ENCODE measurements at regions of chrX and their contacts with region 1.

Region 1: DNA sequence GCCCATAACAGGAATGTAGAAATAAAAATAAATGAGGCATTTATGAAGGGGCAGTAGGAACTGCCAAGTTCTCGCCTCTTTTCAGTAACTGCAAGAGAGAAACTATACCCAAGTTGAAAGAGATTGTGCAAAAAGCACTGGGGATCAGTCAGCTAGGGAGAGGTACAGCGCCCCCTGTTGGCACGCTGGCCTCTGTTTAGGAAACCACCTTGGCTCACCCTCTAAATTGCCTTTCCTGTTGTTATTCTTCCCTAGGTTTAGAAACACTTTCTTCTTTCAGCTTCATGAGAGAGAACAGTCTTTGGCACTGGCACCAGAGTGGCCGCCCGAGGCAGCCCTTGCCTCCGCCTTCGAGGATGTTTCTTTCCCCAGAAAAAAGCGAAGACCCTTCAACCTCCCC is 348.5 kb downstream of the MID1IP1 start:
- DNase-seq: peak; percentile 42
- ATAC-seq: no peak
- H3K4me3 Mint-ChIP-seq: no peak overlapping the region
- H3K27ac Mint-ChIP-seq: peak overlapping the region; percentile 30
- H3K4me1 Mint-ChIP-seq: peaks cover 51% of the 10 kb centered on the region
- H3K27me3 Mint-ChIP-seq: no peaks in the 10 kb centered on the region
- CTCF ChIP-seq: no peak

Region 2: GRCh38 chrX:38754102-38754790 is 395.5 kb before region 1 on chrX:
- CTCF ChIA-PET with region 1: interaction called, 7 read pairs
- POLR2A ChIA-PET with region 1: no interaction called
- intact Hi-C with region 1: loop called (anchors 1 kb)
- DNase-seq: no peak
- ATAC-seq: peak; percentile 58
- H3K4me3 Mint-ChIP-seq: no peak overlapping the region
- H3K27ac Mint-ChIP-seq: no peak overlapping the region
- H3K4me1 Mint-ChIP-seq: no peaks in the 10 kb centered on the region
- H3K27me3 Mint-ChIP-seq: no peaks in the 10 kb centered on the region
- CTCF ChIP-seq: no peak

Region 3: GRCh38 chrX:38803586-38804431 is 346.0 kb before region 1 on chrX:
- CTCF ChIA-PET with region 1: interaction called, 3 read pairs
- POLR2A ChIA-PET with region 1: interaction called, 21 read pairs
- intact Hi-C with region 1: loop called (anchors 1 kb)
- DNase-seq: peak; percentile 55
- ATAC-seq: peak; percentile 63
- H3K4me3 Mint-ChIP-seq: peak overlapping the region; percentile 89
- H3K27ac Mint-ChIP-seq: peak overlapping the region; percentile 80
- H3K4me1 Mint-ChIP-seq: peaks cover 39% of the 10 kb centered on the region
- H3K27me3 Mint-ChIP-seq: no peaks in the 10 kb centered on the region
- CTCF ChIP-seq: no peak

Region 4: DNA sequence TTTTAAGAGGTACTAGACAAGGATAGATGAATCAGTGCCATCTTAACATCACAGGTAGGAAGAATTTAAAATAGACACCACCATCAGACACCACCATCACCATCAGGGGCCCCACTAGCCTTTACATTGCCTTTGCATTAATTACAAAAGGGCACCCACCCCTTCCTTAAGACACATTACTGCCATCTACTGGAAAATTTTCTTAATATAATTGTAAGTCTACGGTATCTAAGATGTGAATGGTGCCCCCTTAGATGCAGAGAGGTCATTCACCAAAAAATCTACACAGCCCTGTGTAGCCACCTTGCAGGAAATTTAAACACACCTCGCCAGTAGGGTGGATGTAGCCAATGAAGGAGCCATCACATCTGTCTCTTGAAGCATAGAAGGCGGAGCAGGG is 164.4 kb before region 1 on chrX:
- CTCF ChIA-PET with region 1: no interaction called
- POLR2A ChIA-PET with region 1: no interaction called
- intact Hi-C with region 1: loop called (anchors 1 kb)
- DNase-seq: no peak
- ATAC-seq: peak; percentile 45
- H3K4me3 Mint-ChIP-seq: no peak overlapping the region
- H3K27ac Mint-ChIP-seq: no peak overlapping the region
- H3K4me1 Mint-ChIP-seq: no peaks in the 10 kb centered on the region
- H3K27me3 Mint-ChIP-seq: no peaks in the 10 kb centered on the region
- CTCF ChIP-seq: no peak

Region 5: DNA sequence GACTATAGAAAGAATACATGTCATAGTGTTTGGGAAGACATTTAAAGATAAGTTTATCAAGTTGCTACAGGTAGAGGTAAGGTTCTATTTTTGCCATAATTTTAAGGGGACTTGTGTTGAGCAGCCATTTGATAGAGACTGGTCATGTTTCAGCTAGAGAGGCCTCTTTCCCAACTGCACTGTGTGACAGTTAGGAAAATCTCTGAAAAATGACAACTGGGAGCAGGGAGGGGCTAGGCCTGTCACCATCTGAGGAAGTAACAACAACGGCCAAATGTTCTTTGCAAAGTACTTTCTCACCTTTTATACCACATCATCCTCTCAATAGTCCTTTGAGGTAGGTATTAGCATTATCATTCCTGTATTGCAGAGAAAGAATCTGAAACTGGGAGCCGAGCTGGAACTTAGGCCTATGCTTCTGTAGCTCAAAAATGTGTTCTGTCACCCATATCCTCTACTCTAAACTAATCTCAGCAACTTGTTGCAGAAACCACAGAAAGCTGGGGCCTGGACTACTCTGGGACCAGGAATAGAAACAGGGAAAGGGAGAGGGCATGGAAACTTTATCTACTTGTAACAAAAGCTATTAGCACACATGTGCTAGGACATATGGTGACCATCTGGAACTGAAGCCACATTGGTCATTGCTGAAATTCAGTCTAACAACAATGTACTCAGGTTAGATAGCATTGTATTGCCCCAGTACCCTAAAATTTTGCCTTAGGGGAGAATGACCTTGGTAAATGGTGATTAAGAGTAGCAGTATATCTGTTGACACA is 149.6 kb before region 1 on chrX:
- CTCF ChIA-PET with region 1: no interaction called
- POLR2A ChIA-PET with region 1: no interaction called
- intact Hi-C with region 1: no loop called
- DNase-seq: no peak
- ATAC-seq: no peak
- H3K4me3 Mint-ChIP-seq: no peak overlapping the region
- H3K27ac Mint-ChIP-seq: no peak overlapping the region
- H3K4me1 Mint-ChIP-seq: no peaks in the 10 kb centered on the region
- H3K27me3 Mint-ChIP-seq: no peaks in the 10 kb centered on the region
- CTCF ChIP-seq: no peak

Region 6: DNA sequence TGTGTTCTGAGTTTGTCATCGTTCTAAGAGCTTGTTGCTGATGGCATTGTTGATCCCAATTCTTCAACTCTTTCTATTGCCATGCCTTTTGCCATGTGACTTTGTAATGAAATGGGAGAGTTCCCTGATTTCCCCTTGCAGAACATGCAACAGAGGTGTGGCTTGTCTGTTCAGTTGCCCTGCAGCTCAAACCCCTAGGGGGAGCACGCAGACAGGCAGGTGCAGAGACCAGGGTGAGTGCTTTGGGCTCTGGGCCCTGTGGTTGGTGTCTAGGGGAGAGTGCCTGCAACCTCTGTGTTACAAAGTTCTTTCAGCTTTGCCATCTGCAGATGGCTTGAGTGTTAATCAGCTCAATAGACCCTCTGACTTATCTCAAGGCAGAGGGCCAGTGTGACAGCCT is 15.8 kb before region 1 on chrX:
- CTCF ChIA-PET with region 1: interaction called, 31 read pairs
- POLR2A ChIA-PET with region 1: interaction called, 21 read pairs
- intact Hi-C with region 1: loop called (anchors 1 kb)
- DNase-seq: peak; percentile 27
- ATAC-seq: peak; percentile 96
- H3K4me3 Mint-ChIP-seq: no peak overlapping the region
- H3K27ac Mint-ChIP-seq: peak overlapping the region; percentile 30
- H3K4me1 Mint-ChIP-seq: peaks cover 39% of the 10 kb centered on the region
- H3K27me3 Mint-ChIP-seq: no peaks in the 10 kb centered on the region
- CTCF ChIP-seq: no peak

Region 7: GRCh38 chrX:39242187-39242586 is 92.4 kb after region 1 on chrX:
- CTCF ChIA-PET with region 1: interaction called, 4 read pairs
- POLR2A ChIA-PET with region 1: no interaction called
- intact Hi-C with region 1: loop called (anchors 5 kb)
- DNase-seq: no peak
- ATAC-seq: no peak
- H3K4me3 Mint-ChIP-seq: no peak overlapping the region
- H3K27ac Mint-ChIP-seq: no peak overlapping the region
- H3K4me1 Mint-ChIP-seq: peaks cover 7% of the 10 kb centered on the region
- H3K27me3 Mint-ChIP-seq: peaks cover 2% of the 10 kb centered on the region
- CTCF ChIP-seq: no peak

Region 8: GRCh38 chrX:39477762-39478120 is 328.0 kb after region 1 on chrX:
- CTCF ChIA-PET with region 1: no interaction called
- POLR2A ChIA-PET with region 1: no interaction called
- intact Hi-C with region 1: no loop called
- DNase-seq: no peak
- ATAC-seq: peak; percentile 62
- H3K4me3 Mint-ChIP-seq: no peak overlapping the region
- H3K27ac Mint-ChIP-seq: no peak overlapping the region
- H3K4me1 Mint-ChIP-seq: peaks cover 5% of the 10 kb centered on the region
- H3K27me3 Mint-ChIP-seq: no peaks in the 10 kb centered on the region
- CTCF ChIP-seq: no peak

Region 9: DNA sequence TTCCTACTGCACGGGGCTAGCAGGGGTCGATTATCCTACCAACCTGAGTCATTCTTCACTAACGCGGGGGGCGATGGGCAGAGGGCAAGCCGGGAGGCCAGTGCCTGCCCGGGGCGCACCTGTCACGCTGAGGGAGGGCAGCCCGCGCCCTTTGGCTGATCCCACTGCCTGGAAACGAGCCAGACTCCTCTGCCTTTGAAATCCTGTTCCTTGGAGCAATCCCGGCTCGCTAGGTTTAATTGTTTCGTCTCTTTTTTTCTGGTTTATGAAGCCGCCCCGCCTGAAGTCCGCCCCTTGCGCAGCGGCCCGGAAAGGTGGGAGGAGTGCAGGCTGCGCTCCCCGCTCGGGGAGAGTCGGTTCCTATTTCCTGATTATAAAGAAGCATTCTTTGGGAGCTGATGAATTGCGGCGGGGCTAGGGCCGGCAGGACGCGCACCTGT is 463.7 kb after region 1 on chrX:
- CTCF ChIA-PET with region 1: no interaction called
- POLR2A ChIA-PET with region 1: no interaction called
- intact Hi-C with region 1: loop called (anchors 1 kb)
- DNase-seq: peak; percentile 14
- ATAC-seq: peak; percentile 23
- H3K4me3 Mint-ChIP-seq: peak overlapping the region; percentile 67
- H3K27ac Mint-ChIP-seq: no peak overlapping the region
- H3K4me1 Mint-ChIP-seq: peaks cover 27% of the 10 kb centered on the region
- H3K27me3 Mint-ChIP-seq: peaks cover 22% of the 10 kb centered on the region
- CTCF ChIP-seq: no peak

Measured in activated B cell treated with CpG ODN at 0.5 μM for 24 hours (primary cell).